WTC11 (cell line): ENCODE measurements at regions of chr3 and their contacts with region 1.

Region 1: DNA sequence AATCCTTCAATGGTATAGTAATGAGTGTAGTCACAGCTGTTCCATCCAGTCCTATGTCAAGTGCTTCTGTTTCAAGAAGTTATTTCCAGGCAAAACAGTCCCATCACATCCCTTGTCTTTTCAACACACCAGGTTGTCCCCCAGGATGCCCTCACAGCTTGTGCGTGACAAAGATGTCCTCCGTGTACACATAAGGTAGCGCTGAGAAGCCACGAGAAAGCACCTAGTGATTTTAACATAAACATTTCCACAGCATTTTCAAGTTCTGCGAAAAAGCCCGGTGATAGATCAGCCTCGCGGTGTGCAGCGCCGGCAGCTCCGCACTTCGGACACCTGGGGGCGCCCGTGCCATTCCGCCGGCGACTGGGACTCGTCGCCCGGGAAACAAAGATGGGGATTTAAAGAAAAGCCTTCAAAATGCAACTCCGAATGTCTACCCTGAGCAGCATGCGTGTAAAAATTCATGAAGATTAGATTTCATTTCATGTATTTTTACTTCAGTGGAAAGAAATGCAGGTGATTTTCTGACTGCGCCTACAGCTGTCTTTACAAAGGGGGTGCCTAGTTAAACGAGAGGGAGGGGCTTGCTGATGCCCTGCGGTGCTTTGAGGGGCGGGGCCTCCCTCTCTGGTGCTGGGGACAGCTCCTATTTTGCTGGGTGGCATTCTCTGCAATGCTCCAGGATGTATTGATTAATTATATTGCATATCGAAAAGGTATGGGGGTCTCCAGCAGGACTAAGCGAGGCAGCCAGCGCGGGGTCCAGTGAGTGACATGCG is 49.9 kb downstream of the KY start:
- DNase-seq: peak; percentile 79
- ATAC-seq: peak; percentile 76
- H3K4me3 Mint-ChIP-seq: peak overlapping the region; percentile 65
- H3K27ac Mint-ChIP-seq: no peak overlapping the region
- H3K4me1 Mint-ChIP-seq: peaks cover 15% of the 10 kb centered on the region
- H3K27me3 Mint-ChIP-seq: peaks cover 12% of the 10 kb centered on the region
- CTCF ChIP-seq: peak; percentile 89

Region 2: GRCh38 chr3:134496471-134497071 is 104.3 kb before region 1 on chr3:
- CTCF ChIA-PET with region 1: no interaction called
- POLR2A ChIA-PET with region 1: no interaction called
- DNase-seq: no peak
- ATAC-seq: no peak
- H3K4me3 Mint-ChIP-seq: no peak overlapping the region
- H3K27ac Mint-ChIP-seq: no peak overlapping the region
- H3K4me1 Mint-ChIP-seq: peaks cover 15% of the 10 kb centered on the region
- H3K27me3 Mint-ChIP-seq: no peaks in the 10 kb centered on the region
- CTCF ChIP-seq: no peak

Region 3: DNA sequence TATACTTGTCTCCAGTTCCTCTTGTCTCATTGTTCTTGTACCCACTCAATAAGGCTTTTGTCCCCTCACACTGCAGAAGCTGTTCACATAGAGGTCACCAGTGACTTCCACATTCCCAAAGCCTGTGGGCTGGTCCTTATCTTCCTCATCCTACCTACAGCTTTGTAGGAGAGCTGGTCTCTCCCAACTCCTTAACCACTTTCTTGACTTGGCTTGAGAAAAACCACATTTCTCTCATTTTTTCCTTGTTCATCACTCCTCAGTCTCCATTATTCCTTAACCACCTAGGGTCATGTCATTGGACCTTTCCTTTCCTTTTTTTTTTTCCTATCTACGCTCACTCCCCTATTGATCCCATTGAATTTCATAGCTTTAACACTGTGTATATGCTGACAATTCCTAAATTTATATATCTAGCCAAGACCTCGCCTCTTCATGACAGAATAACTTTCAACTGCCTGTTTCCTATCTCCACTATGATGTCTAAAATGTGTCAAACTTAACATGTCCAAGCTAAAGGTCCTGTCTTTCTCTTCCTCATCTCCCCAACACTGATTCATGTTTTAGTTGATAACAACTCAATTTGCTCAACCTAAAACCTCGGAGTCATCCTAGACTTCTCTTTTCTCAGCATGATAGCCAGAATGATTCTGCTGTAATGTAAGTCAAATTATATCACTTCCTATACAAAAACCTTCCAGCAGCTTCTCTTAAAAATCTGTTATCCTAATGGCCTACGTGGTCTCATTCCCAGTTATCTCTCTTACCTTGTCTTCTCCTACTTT is 65.5 kb before region 1 on chr3:
- CTCF ChIA-PET with region 1: no interaction called
- POLR2A ChIA-PET with region 1: no interaction called
- DNase-seq: no peak
- ATAC-seq: no peak
- H3K4me3 Mint-ChIP-seq: no peak overlapping the region
- H3K27ac Mint-ChIP-seq: no peak overlapping the region
- H3K4me1 Mint-ChIP-seq: no peaks in the 10 kb centered on the region
- H3K27me3 Mint-ChIP-seq: no peaks in the 10 kb centered on the region
- CTCF ChIP-seq: no peak

Region 4: GRCh38 chr3:134618478-134619300 is 17.8 kb after region 1 on chr3:
- CTCF ChIA-PET with region 1: interaction called, 40 read pairs
- POLR2A ChIA-PET with region 1: no interaction called
- DNase-seq: no peak
- ATAC-seq: no peak
- H3K4me3 Mint-ChIP-seq: no peak overlapping the region
- H3K27ac Mint-ChIP-seq: no peak overlapping the region; the same call in 1 of the 2 replicates
- H3K4me1 Mint-ChIP-seq: peaks cover 7% of the 10 kb centered on the region; the same call in 1 of the 2 replicates
- H3K27me3 Mint-ChIP-seq: no peaks in the 10 kb centered on the region
- CTCF ChIP-seq: no peak

Region 5: GRCh38 chr3:134640872-134641470 is 40.1 kb after region 1 on chr3:
- CTCF ChIA-PET with region 1: interaction called, 60 read pairs
- POLR2A ChIA-PET with region 1: interaction called, 3 read pairs
- DNase-seq: peak; percentile 57
- ATAC-seq: peak; percentile 75
- H3K4me3 Mint-ChIP-seq: no peak overlapping the region
- H3K27ac Mint-ChIP-seq: no peak overlapping the region
- H3K4me1 Mint-ChIP-seq: peaks cover 37% of the 10 kb centered on the region
- H3K27me3 Mint-ChIP-seq: peaks cover 31% of the 10 kb centered on the region
- CTCF ChIP-seq: peak; percentile 35; the same call in 1 of the 2 replicates

Region 6: GRCh38 chr3:134650431-134651346 is 49.8 kb after region 1 on chr3 and contains the start of gene KY:
- CTCF ChIA-PET with region 1: interaction called, 60 read pairs
- POLR2A ChIA-PET with region 1: no interaction called
- DNase-seq: peak; percentile 69
- ATAC-seq: peak; percentile 84
- H3K4me3 Mint-ChIP-seq: peak within 1 kb of the TSS; percentile 68
- H3K27ac Mint-ChIP-seq: no peak within 1 kb of the TSS
- H3K4me1 Mint-ChIP-seq: peaks cover 11% of the 10 kb centered on the region
- H3K27me3 Mint-ChIP-seq: peaks cover 100% of the 10 kb centered on the region
- CTCF ChIP-seq: no peak; the same call in 1 of the 2 replicates
- total RNA-seq, gene KY: not detected in 3 replicates

Region 7: DNA sequence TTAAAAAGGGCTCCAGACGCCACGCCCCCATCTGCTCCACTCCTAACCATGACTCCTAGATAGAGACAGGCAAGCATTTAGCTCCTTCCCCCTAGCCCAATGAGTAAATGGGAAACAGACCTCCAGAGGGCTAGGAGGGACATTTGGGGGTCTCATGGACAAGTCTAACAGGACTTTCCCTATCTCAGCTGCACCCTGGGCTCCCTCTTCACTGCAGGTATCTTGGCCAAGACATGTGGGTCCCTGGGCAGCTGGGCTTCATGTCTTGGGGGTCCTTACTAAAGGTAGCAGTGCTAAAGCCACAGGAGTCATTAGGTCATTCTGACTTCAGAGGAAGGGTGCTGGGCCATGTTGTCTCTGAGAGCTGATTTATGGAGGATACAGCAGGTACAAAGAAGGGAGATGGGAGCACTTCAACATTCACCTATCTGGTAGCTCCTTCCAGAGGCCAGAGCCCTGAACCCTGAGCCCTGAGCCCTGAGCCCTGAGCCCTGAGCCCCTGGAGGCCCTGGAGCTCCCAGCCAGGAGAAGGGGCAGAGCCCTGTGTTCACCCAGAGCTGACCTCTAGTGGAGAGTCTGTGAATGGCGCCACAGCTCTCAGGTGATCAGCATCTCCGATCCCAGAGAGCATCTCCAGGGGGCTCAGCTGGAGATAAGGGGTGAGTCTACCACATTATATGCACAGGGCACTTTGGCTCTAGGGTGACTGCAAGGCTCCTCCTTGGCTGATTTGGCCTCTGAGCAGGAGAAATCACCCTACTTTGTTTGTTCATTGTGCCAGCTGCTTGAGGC is 154.1 kb after region 1 on chr3:
- CTCF ChIA-PET with region 1: interaction called, 61 read pairs
- POLR2A ChIA-PET with region 1: no interaction called
- DNase-seq: peak; percentile 85
- ATAC-seq: peak; percentile 97
- H3K4me3 Mint-ChIP-seq: no peak overlapping the region
- H3K27ac Mint-ChIP-seq: no peak overlapping the region
- H3K4me1 Mint-ChIP-seq: no peaks in the 10 kb centered on the region
- H3K27me3 Mint-ChIP-seq: no peaks in the 10 kb centered on the region; the same call in 1 of the 2 replicates
- CTCF ChIP-seq: peak; percentile 75

Region 8: DNA sequence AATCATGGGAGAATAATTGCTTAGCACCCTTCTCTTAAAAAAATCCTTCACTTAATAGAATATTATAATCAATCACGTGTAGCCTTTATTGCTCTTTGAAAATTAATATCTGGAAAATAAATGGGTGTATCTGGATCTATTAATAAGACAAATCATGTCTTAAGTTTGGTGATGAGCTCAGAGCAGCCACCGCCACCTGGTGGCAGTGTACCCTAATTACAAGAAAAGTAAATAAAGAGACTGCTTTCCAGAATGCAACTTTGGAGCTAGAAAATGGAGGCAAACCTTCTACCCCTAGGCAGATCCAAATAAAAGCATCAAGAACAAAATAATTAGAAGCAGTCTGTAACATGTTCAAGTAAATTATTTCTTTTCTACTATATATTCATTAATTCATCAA is 237.7 kb after region 1 on chr3:
- CTCF ChIA-PET with region 1: interaction called, 10 read pairs
- POLR2A ChIA-PET with region 1: no interaction called
- DNase-seq: no peak
- ATAC-seq: no peak
- H3K4me3 Mint-ChIP-seq: no peak overlapping the region
- H3K27ac Mint-ChIP-seq: no peak overlapping the region
- H3K4me1 Mint-ChIP-seq: no peaks in the 10 kb centered on the region
- H3K27me3 Mint-ChIP-seq: peaks cover 7% of the 10 kb centered on the region
- CTCF ChIP-seq: peak; percentile 58